GM12878 (cell line): ENCODE measurements at regions of chr11 and their contacts with region 1.

Region 1: DNA sequence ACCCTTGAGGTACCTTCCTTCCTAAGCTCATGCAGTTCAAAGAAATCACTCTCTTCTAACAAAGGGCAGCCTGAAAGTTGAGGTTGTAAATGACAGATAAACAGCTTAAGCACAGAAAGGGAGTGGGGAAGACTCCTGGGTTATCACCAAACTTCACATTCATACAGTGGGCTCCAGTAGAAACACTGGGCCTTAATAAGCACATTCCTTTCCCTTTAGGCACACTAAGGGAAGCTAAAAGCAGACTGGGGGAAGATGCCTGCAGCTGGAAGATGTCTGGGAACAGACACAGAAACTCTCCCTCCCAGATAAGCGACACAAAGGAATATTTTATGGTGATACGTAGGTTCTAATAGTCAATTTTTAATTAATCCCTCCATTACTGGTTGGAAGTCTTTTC is 350.3 kb upstream of the MPPED2 start:
- DNase-seq: no peak
- ATAC-seq: no peak
- H3K4me3 ChIP-seq: no peak overlapping the region
- H3K27ac ChIP-seq: no peak overlapping the region
- H3K4me1 ChIP-seq: no peaks in the 10 kb centered on the region
- H3K27me3 ChIP-seq: no peaks in the 10 kb centered on the region
- CTCF ChIP-seq: no peak
- EP300 ChIP-seq: no peak
- POLR2A ChIP-seq: no peak
- RAD21 ChIP-seq: no peak

Region 2: GRCh38 chr11:30992513-30992849 is 56.0 kb after region 1 on chr11:
- CTCF ChIA-PET with region 1: no interaction called
- POLR2A ChIA-PET with region 1: no interaction called
- RAD21 ChIA-PET with region 1: no interaction called
- SMC1A ChIA-PET with region 1: no interaction called
- in situ Hi-C with region 1: no loop called
- intact Hi-C with region 1: loop called (anchors 5 kb)
- DNase-seq: no peak
- ATAC-seq: peak; percentile 78
- H3K4me3 ChIP-seq: no peak overlapping the region
- H3K27ac ChIP-seq: no peak overlapping the region
- H3K4me1 ChIP-seq: no peaks in the 10 kb centered on the region
- H3K27me3 ChIP-seq: no peaks in the 10 kb centered on the region
- CTCF ChIP-seq: no peak
- EP300 ChIP-seq: no peak
- POLR2A ChIP-seq: no peak
- RAD21 ChIP-seq: no peak